Activated B cell treated with CpG ODN at 0.5 μM for 24 hours (primary cell): ENCODE measurements at regions of chr16 and their contacts with region 1.

Region 1: DNA sequence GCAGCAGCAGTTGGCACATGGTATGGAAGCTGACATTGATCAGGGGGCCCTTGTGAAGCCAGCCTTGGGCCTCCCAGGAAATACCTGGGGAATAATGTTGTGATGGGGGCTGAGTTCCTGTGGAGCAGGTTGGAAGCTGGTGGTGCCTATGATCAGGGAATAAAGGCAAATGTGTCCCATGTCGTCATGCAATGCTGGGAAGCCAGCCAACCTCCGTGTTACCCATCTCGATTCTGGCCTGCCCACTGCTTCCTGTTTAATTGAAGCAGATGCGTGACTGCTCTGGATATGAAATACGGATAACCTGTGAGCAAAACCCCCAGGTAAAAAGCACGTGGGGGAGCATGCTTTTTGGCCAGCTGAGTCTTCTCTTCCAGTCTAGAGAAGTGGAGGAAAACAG is 580.4 kb upstream of the HSBP1 start:
- DNase-seq: no peak
- ATAC-seq: no peak
- H3K4me3 Mint-ChIP-seq: no peak overlapping the region
- H3K27ac Mint-ChIP-seq: no peak overlapping the region
- H3K4me1 Mint-ChIP-seq: no peaks in the 10 kb centered on the region
- H3K27me3 Mint-ChIP-seq: peaks cover 3% of the 10 kb centered on the region
- CTCF ChIP-seq: no peak

Region 2: DNA sequence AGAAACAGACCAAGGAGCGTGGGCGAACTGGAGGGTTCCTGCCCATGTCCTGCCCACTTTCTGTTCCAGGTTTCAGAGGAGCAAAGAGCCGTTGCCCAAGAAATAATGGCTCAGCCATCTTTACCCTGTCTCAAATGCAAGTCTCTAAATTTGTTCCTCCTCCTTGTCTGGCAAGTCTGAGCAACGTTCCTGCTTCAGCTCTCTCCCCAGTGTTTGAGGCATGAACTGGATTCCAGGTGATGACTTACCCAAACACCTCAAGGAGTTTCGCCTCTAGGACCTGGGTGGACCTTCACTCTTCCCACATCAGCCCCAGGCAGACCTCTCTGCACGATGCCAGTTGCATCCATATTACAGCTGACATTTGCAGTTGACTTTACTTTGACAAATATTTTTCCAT is 58.6 kb after region 1 on chr16:
- CTCF ChIA-PET with region 1: no interaction called
- POLR2A ChIA-PET with region 1: no interaction called
- intact Hi-C with region 1: loop called (anchors 10 kb)
- DNase-seq: no peak
- ATAC-seq: no peak
- H3K4me3 Mint-ChIP-seq: no peak overlapping the region
- H3K27ac Mint-ChIP-seq: no peak overlapping the region
- H3K4me1 Mint-ChIP-seq: no peaks in the 10 kb centered on the region
- H3K27me3 Mint-ChIP-seq: peaks cover 3% of the 10 kb centered on the region
- CTCF ChIP-seq: no peak